ENCODE measurements at regions of chr13 and their contacts with region 1.

Region 1: DNA sequence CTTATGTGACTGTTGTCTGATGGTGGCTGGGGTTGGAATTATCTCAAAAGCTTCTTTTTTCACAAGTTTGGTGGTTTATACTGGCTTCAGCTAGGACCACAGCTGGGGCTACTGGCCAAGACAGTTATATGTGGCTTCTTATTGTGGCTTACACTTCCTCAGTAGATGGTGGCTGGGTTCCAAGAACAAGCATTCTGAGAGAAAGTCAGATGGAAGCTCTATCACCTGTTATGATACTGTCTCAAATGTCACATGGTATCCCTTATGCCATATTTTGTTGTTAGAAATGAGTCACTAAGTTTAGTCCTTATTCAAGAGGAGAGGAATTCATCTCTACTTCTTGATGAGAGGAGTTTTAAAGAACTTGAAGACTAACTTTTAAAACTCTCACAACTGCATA is 41.6 kb downstream of the NDFIP2 start:
- DNase-seq: no peak
- H3K4me3 ChIP-seq: no peak overlapping the region
- H3K27ac ChIP-seq: no peak overlapping the region
- H3K4me1 ChIP-seq: no peaks in the 10 kb centered on the region
- H3K27me3 ChIP-seq: no peaks in the 10 kb centered on the region
- CTCF ChIP-seq: no peak
- EP300 ChIP-seq: no peak
- POLR2A ChIP-seq: no peak

Region 2: DNA sequence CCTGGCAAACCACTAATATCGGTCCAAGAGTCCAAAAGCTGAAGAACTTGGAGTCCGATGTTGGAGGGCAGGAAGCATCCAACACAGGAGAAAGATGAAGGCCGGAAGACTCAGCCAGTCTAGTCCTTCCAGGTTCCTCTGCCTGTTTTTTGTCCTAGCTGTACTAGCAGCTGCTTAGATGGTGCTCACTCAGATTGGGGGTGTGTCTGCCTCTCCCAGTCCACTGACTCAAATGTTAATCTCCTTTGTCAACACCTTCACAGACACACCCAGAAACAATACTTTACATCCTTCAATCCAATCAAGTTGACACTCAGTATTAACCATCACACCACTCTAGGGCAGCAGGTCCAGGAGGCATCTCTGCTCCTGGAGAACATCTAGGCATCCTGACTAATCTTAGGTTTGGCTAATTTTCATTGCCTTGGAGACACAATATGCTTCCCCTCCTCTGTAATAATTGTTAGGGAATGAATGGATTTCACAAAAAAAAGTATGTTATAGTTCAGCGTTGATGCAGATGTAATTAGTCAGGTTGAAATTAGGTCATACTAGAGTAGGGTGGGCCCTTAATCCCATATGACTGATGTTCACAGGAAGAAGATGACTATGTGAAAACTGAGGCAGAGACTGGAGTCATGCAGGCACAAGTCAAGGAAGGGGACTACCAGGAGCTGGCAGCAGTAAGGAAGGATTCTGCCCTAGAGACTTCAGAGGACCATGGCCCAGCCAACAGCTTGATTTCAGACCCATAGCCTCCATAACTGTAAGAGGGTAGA is 300.0 kb before region 1 on chr13:
- intact Hi-C with region 1: no loop called
- DNase-seq: no peak
- H3K4me3 ChIP-seq: no peak overlapping the region
- H3K27ac ChIP-seq: no peak overlapping the region
- H3K4me1 ChIP-seq: no peaks in the 10 kb centered on the region
- H3K27me3 ChIP-seq: no peaks in the 10 kb centered on the region
- CTCF ChIP-seq: no peak
- EP300 ChIP-seq: no peak
- POLR2A ChIP-seq: no peak

Region 3: DNA sequence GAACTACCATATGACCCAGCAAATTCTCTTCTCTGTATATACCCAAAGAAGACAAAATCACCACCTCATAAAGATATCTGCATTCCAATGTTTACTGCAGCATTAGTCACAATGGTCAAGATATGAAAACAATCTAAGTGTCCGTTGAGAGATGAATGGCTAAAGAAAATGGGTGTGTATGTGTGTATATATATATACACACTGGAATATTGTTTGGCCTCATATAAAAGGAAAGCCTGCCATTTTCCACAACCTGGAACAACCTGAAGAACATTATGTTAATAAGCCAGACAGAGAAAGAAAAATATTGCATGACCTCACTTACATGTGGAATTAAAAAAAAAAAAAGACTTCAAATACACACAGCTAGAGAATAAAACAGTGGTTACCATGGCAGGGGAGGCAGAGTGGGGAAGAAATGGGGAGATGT is 87.0 kb before region 1 on chr13:
- intact Hi-C with region 1: loop called in 1 of 4 experiments (anchors 10 kb)
- DNase-seq: no peak
- H3K4me3 ChIP-seq: no peak overlapping the region
- H3K27ac ChIP-seq: no peak overlapping the region
- H3K4me1 ChIP-seq: no peaks in the 10 kb centered on the region
- H3K27me3 ChIP-seq: no peaks in the 10 kb centered on the region
- CTCF ChIP-seq: no peak
- EP300 ChIP-seq: no peak
- POLR2A ChIP-seq: no peak

Region 4: GRCh38 chr13:80065996-80066395 is 543.4 kb after region 1 on chr13:
- intact Hi-C with region 1: no loop called
- DNase-seq: no peak
- H3K4me3 ChIP-seq: no peak overlapping the region
- H3K27ac ChIP-seq: no peak overlapping the region
- H3K4me1 ChIP-seq: no peaks in the 10 kb centered on the region
- H3K27me3 ChIP-seq: peaks cover 3% of the 10 kb centered on the region
- CTCF ChIP-seq: no peak
- EP300 ChIP-seq: no peak
- POLR2A ChIP-seq: no peak

Measured in ovary (tissue), 10 donors.